A549 (cell line): ENCODE measurements at regions of chr1 and their contacts with region 1.

Region 1: DNA sequence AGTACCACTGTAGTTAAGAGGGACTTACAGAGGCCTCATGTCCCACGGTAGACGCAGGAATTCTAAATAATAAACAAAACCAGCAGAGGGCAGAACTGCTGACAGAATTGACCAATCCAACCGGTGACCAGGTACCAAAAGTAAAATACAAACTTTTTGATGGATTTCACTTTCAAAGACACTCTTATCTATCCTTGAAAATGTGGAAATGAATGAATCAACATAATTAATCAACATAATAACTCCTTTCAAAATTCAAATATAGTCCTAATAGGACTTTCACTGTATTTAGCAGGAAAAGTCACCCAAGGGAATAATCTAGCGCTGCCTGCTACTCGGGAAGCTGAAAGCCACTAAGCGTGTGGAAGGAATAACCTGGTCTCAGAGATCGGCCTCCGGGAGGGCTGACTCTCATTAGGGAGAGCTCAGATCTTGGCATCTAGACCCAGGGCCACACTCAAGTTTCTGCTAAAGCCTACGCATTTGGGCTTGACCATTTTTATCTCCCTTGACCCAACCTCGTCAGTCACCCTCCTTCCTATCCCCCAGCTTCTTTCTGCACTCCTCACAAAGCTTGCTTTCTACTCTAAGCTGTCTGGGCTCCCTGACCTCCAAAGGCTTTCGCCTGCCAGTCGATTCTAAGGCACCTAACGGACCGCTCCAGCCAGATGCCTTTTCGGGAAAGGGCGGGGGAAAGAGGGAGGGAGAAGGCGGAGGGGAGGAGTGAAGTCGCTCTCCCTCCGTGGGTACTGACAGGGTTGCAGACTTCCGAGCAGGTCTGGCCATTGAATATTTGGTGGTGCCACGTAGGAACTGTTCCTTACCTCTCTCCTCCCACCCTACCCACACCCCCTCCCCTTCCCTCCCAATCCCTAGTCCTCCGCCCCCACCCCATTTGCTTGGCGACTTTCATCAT is 1.6 kb downstream of the COL11A1 start:
- DNase-seq: peak; percentile 11 to 54
- ATAC-seq: peak; percentile 87 to 94
- H3K4me3 ChIP-seq: peak overlapping the region; percentile 51
- H3K27ac ChIP-seq: peak overlapping the region; percentile 40 to 61
- H3K4me1 ChIP-seq: no peaks in the 10 kb centered on the region
- CTCF ChIP-seq: peak; percentile 61
- EP300 ChIP-seq: no peak
- POLR2A ChIP-seq: no peak
- RAD21 ChIP-seq: peak; percentile 52 to 62

Region 2: GRCh38 chr1:103461161-103462105 is 354.7 kb after region 1 on chr1:
- CTCF ChIA-PET with region 1: interaction called, 11 read pairs
- POLR2A ChIA-PET with region 1: no interaction called
- DNase-seq: peak; percentile 1 to 4
- ATAC-seq: no peak
- H3K4me3 ChIP-seq: no peak overlapping the region
- H3K27ac ChIP-seq: no peak overlapping the region
- H3K4me1 ChIP-seq: no peaks in the 10 kb centered on the region
- CTCF ChIP-seq: peak; percentile 58
- EP300 ChIP-seq: no peak
- POLR2A ChIP-seq: no peak
- RAD21 ChIP-seq: peak; percentile 56 to 75